Psoas muscle (tissue), 8 donors: ENCODE measurements at regions of chr10 and their contacts with region 1.

Region 1: GRCh38 chr10:22316285-22317120 is at the start of gene COMMD3:
- DNase-seq: peak; percentile 89 to 94
- ATAC-seq: peak; percentile 85 to 88 (median 86)
- H3K4me3 ChIP-seq: peak within 1 kb of the TSS; percentile 92
- H3K27ac ChIP-seq: peak within 1 kb of the TSS; percentile 95
- H3K4me1 ChIP-seq: peaks cover 28% of the 10 kb centered on the region
- H3K27me3 ChIP-seq: no peaks in the 10 kb centered on the region
- CTCF ChIP-seq: no peak
- total RNA-seq, gene COMMD3: 45.5 to 81.4 (median 64.8) TPM

Region 2: DNA sequence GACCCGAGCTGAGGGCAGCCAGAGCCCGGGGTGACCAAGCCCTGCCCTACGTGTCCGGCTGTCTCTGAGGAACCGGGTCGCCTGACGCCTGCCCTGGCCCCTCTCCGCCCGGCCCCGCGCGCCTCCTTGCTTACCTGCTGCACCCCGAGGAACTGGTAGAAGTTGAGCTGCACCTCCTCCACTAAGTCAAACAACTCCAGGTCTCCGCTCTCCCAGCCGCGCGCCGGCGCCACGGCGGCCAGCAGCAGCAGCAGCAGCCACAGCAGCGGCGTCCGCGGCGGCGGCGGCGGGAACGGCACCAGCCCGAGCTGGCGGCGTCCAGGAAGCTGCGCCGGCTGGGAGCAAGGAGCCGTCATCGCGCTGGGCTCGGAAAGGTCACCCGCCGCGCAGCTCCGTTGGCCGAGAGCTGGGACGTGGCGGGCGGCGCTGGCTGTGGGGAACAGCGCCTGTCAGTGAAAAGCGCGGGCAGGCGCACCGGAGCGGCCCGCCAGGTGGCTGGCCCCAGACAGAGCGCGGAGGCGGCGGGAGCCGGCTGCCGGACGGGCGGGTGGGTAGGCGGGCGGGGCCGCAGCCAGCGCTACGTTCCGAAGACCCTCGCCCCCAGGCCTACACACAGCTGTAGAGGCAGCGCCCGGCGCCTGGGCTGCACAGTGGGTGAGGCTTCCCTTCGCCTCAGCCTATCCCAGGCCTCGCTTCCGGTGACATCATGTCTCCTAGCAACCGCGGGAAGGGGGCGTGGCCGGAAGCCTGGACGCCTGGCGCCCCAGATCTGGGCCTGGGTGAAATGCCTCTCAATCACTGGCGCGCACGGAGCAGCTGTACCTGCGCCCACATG is 313.2 kb before region 1 on chr10 and contains the start of gene DNAJC1:
- intact Hi-C with region 1: loop called in 1 of 2 experiments (anchors 5 kb)
- DNase-seq: peak; percentile 99
- ATAC-seq: peak; percentile 97 to 99 (median 98)
- H3K4me3 ChIP-seq: peak within 1 kb of the TSS; percentile 78
- H3K27ac ChIP-seq: peak within 1 kb of the TSS; percentile 94
- H3K4me1 ChIP-seq: peaks cover 12% of the 10 kb centered on the region
- H3K27me3 ChIP-seq: no peaks in the 10 kb centered on the region
- CTCF ChIP-seq: no peak
- total RNA-seq, gene DNAJC1: 6.7 to 18.8 (median 11.3) TPM

Region 3: GRCh38 chr10:22210277-22210676 is 106.2 kb before region 1 on chr10:
- intact Hi-C with region 1: no loop called
- DNase-seq: no peak
- ATAC-seq: no peak
- H3K4me3 ChIP-seq: no peak overlapping the region
- H3K27ac ChIP-seq: no peak overlapping the region
- H3K4me1 ChIP-seq: no peaks in the 10 kb centered on the region
- H3K27me3 ChIP-seq: no peaks in the 10 kb centered on the region
- CTCF ChIP-seq: no peak

Region 4: DNA sequence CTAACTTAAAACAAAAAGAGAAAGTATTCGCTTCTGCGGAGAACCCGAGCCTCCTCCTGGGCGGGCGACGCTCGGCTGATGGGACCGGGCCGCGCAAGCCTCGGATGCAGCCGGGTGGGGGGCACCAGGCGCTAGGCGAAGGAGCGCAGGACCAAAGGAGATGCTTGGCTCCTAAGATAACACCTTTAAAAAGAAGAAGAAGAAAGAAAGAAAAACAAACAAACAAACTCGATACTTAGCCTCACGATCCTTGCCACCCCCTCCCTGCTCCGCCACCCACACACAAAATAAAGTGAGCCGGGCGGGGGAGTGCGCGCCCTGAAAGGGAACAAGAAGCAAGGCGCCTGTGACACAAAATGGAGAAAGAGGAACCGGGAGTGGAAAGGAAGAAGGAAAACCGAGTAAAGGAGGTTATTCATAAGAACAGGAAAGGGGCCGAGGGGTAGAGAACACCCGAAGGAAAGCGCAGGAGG is 64.7 kb before region 1 on chr10:
- intact Hi-C with region 1: loop called (anchors 2 to 5 kb)
- DNase-seq: peak; percentile 63 to 79
- ATAC-seq: peak; percentile 65 to 81 (median 68)
- H3K4me3 ChIP-seq: peak overlapping the region; percentile 94
- H3K27ac ChIP-seq: peak overlapping the region; percentile 87
- H3K4me1 ChIP-seq: peaks cover 4% of the 10 kb centered on the region
- H3K27me3 ChIP-seq: no peaks in the 10 kb centered on the region
- CTCF ChIP-seq: no peak

Region 5: GRCh38 chr10:22427890-22428571 is 111.5 kb after region 1 on chr10:
- intact Hi-C with region 1: loop called in 1 of 2 experiments (anchors 5 kb)
- DNase-seq: no peak
- ATAC-seq: peak; percentile 67 to 95 (median 92)
- H3K4me3 ChIP-seq: no peak overlapping the region
- H3K27ac ChIP-seq: no peak overlapping the region
- H3K4me1 ChIP-seq: peaks cover 19% of the 10 kb centered on the region
- H3K27me3 ChIP-seq: no peaks in the 10 kb centered on the region
- CTCF ChIP-seq: no peak